ENCODE measurements at regions of chr12 and their contacts with region 1.

Region 1: GRCh38 chr12:30806989-30807694 is 52.4 kb upstream of the CAPRIN2 start:
- DNase-seq: peak; percentile 68 to 84 (median 79)
- H3K4me3 ChIP-seq: no peak overlapping the region
- H3K27ac ChIP-seq: no peak overlapping the region
- H3K4me1 ChIP-seq: peaks cover 0 to 3% (median 0%) of the 10 kb centered on the region in 4 experiments
- H3K27me3 ChIP-seq: peaks cover 0 to 2% (median 0%) of the 10 kb centered on the region in 5 experiments

Region 2: DNA sequence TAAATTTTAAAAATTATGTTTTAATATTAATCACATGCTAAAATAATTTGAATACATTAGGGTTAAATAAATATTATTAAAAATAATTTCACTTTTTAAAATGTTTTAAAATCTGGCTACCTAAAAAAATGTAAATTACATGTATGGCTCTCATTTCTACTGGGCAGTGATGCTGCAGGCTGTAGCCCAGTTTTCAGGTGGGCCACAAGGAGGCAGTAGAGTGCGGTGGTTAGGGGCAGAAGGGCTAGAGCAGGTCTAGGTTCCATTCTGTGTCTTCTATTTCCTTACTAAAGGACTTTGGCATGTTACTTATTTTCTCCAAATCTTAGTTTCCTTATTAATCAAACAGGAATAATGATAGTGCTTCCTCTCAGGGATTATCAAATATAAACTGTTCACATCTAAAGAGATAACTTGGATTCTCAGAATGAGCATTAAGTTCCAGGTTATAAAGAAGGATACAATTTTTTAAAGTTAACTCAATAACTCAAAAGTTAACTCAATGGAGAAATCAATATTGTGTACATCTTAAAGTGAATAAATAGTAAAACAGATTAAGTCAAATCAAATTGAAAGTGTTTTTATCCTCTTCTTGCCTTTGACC is 1254.7 kb before region 1 on chr12:
- CTCF ChIA-PET with region 1: interaction called, 11 read pairs
- POLR2A ChIA-PET with region 1: no interaction called
- DNase-seq: peak; percentile 32 to 75 (median 63)
- H3K4me3 ChIP-seq: no peak overlapping the region
- H3K27ac ChIP-seq: no peak overlapping the region
- H3K4me1 ChIP-seq: no peaks in the 10 kb centered on the region
- H3K27me3 ChIP-seq: peaks cover 0 to 2% (median 0%) of the 10 kb centered on the region in 5 experiments